Head of caudate nucleus (tissue), 42 donors: ENCODE measurements at regions of chr4 and their contacts with region 1.

Region 1: GRCh38 chr4:2934813-2935761 is 28.1 kb downstream of the NOP14 start:
- DNase-seq: peak; percentile 79 to 97 (median 93)

Region 2: GRCh38 chr4:2761035-2761923 is 173.8 kb before region 1 on chr4:
- intact Hi-C with region 1: loop called (anchors 10 kb)
- DNase-seq: no peak

Region 3: DNA sequence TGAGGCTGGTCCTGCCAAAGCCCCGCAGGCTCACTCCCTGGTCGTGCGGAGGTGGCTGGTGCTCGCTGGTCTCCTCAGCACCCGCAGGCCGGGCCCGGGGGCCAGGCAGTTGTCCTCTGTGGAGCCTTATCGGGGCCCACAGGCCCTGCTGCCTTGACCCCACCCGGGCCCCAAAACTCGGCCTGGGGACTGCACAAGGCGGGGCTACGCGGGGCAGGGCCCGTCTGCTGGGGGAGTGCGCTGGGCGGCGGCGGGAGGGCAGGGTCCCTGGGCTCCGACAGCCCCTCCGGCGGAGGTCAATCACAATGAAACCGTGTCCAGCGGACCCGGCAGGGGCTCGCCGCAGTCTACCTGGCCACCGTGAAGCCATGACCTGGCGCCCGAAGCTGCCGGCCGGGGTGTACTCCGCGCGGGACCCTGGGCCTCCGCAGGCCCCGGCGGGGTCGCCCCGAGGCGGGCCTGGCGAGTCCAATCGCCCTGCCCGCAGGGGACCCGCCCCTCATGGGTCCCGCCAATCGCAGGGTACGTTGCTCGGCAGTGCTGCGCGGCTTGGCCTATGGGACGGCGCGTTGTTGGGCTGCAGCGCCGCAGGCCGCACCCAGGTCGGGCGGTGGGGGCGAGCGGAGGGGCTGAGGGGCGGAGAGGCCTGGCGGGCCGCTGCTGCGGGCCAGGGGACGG is 91.7 kb before region 1 on chr4 and contains the start of gene ADD1:
- intact Hi-C with region 1: loop called (anchors 5 kb)
- DNase-seq: peak; percentile 82 to 98 (median 94)

Region 4: GRCh38 chr4:3145234-3145924 is 210.3 kb after region 1 on chr4:
- intact Hi-C with region 1: no loop called
- DNase-seq: no peak